HEK293T (cell line): ENCODE measurements at regions of chr12 and their contacts with region 1.

Region 1: DNA sequence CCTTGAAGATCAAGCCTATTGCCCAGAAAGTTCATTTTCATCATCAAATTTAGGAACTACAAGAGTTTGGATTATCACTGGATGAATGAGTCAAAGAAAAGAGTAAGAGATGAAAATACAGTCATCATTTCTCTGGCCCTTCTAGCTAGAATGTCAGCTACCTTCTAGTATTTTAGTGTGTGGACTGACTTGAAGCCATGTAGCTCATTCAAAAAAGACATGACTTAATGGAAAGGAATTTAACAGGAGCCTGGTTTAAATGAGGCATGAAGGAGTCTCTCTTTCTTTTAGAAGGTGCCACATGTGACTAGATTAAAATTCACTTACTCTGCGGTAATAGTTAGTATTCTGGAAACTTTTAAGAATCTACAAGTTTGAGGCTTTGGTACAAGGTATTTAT is 7.1 kb downstream of the PTHLH start:
- DNase-seq: no peak

Region 2: GRCh38 chr12:28051516-28052354 is 86.3 kb after region 1 on chr12:
- CTCF ChIA-PET with region 1: interaction called, 11 read pairs
- POLR2A ChIA-PET with region 1: no interaction called
- DNase-seq: no peak